ENCODE measurements at regions of chr5 and their contacts with region 1.

Region 1: DNA sequence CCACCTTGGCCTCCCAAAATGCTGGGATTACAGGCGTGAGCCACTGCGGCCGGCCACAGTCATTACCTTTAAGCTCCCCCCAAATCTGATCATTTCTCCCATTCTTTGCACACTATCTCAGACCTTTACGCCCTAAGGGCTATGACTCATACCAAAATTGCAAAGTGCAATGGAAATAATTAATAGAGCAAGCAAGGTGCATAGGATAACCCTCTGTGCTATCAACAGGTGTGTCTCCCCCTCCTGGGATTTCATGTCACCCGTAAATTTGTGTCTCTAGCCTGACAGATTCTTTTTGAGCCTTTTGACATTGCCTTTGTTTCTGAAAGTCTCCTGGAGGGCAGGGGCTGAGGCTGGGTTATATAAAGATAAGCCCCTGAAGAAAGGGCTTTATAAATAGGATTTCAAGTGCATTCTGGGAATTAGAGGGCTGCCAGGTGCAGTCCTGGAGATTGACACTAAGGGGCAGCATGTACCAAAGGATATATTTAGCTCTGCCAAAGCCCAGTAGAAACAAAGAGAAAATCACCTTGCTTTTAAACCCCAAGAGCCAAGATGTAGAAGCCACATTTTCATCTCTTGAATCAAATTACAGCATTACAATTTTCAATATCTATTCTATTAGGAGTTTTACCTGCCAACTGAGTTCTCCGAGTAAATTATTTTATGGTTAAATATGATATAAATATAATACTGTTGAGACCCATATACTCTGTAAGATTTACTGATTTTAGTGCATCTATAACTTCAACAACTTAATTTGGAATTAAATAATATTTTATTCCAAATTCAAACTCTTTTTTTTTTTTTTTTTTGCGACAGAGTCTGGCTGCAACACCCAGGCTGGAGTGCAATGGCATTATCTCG is 18.2 kb downstream of the S100Z start:
- DNase-seq: peak; percentile 51 to 88 (median 68)
- H3K4me3 ChIP-seq: no peak overlapping the region
- H3K27ac ChIP-seq: no peak overlapping the region
- H3K4me1 ChIP-seq: no peaks in the 10 kb centered on the region
- H3K27me3 ChIP-seq: no peaks in the 10 kb centered on the region
- CTCF ChIP-seq: peak; percentile 72 to 89 (median 84)
- POLR2A ChIP-seq: no peak

Region 2: GRCh38 chr5:77015938-77016569 is 148.0 kb after region 1 on chr5:
- intact Hi-C with region 1: loop called (anchors 2 to 5 kb)
- DNase-seq: no peak
- H3K4me3 ChIP-seq: no peak overlapping the region
- H3K27ac ChIP-seq: no peak overlapping the region
- H3K4me1 ChIP-seq: no peaks in the 10 kb centered on the region
- H3K27me3 ChIP-seq: no peaks in the 10 kb centered on the region
- CTCF ChIP-seq: peak; percentile 25 to 69 (median 54)
- POLR2A ChIP-seq: no peak

Measured in adrenal gland (tissue), 19 donors.